GM18951 (cell line): ENCODE measurements at regions of chr2 and their contacts with region 1.

Region 1: DNA sequence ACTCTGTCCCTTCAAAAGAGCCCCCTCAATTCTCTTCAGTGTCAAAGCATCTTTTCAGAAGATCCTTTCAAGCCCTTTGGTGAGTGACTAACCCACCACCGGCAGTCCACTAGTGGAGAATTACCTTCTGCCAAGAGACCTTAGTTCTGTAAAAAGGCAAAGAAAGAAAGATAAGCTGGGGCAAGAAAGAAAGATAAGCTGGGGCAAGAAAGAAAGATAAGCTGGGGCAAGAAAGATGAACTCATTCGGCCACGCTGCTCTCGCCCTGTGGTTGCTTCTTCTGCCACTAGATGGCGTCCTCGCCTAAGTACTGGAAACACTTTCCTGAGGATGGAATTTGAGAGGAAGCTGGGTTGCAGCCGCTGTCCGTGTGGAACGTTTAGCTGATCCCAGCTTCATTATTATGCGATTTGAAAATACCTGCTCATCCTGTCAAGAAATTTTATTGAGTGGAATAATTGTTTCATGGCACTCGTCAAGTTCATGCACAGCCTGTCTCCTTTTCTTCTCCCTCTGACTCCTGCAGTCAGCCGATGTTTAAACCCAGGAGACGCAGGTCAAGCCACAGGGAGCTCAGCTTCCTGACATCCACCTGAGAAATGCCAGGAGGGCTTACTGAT is 17.3 kb upstream of the ANXA4 start:
- POLR2A ChIP-seq: no peak

Region 2: DNA sequence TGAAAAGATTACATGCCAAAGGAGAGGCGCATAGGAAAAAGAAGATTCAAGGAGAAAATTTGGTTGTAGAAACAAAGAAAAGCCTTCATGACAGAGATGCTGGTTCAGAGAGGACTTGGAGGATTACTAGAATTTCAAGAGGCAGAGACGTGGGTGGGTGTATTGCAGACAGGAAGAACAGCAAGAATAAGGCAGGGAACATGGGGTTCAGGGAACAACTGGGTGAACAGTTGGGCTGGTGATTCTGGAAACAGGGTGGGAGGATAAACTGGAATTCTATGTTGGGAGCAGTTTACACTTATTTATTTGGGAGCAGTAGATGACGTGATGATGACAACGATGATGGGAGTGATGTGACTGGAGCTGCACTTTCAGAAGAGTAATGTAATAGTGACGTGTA is 86.4 kb after region 1 on chr2:
- in situ Hi-C with region 1: loop called (anchors 5 kb)
- POLR2A ChIP-seq: no peak

Region 3: GRCh38 chr2:69893684-69894551 is 169.3 kb after region 1 on chr2 and contains the start of gene SNRNP27:
- in situ Hi-C with region 1: loop called (anchors 10 kb)
- POLR2A ChIP-seq: peak; percentile 74

Region 4: GRCh38 chr2:70403267-70404053 is 678.8 kb after region 1 on chr2:
- in situ Hi-C with region 1: no loop called
- POLR2A ChIP-seq: no peak